CD8-positive, alpha-beta T cell (primary cell): ENCODE measurements at regions of chr17 and their contacts with region 1.

Region 1: GRCh38 chr17:41308251-41308917 is 725 bp downstream of the KRTAP16-1 start:
- DNase-seq: peak; percentile 75 to 95 (median 84)
- ATAC-seq: peak; percentile 82
- H3K4me3 ChIP-seq: peak overlapping the region; percentile 4 to 25
- H3K4me3 Mint-ChIP-seq: peak overlapping the region; percentile 56
- H3K27ac ChIP-seq: peak overlapping the region; percentile 79 to 80
- H3K27ac Mint-ChIP-seq: peak overlapping the region; percentile 98
- H3K4me1 ChIP-seq: peaks cover 48% of the 10 kb centered on the region
- H3K4me1 Mint-ChIP-seq: peaks cover 62% of the 10 kb centered on the region
- H3K27me3 ChIP-seq: no peaks in the 10 kb centered on the region
- H3K27me3 Mint-ChIP-seq: no peaks in the 10 kb centered on the region
- CTCF ChIP-seq: no peak

Region 2: GRCh38 chr17:41127371-41127770 is 181.0 kb before region 1 on chr17:
- CTCF ChIA-PET with region 1: no interaction called
- POLR2A ChIA-PET with region 1: interaction called, 6 read pairs
- intact Hi-C with region 1: loop called (anchors 5 kb)
- DNase-seq: no peak
- ATAC-seq: no peak
- H3K4me3 ChIP-seq: no peak overlapping the region
- H3K4me3 Mint-ChIP-seq: no peak overlapping the region
- H3K27ac ChIP-seq: no peak overlapping the region
- H3K27ac Mint-ChIP-seq: no peak overlapping the region
- H3K4me1 ChIP-seq: peaks cover 43% of the 10 kb centered on the region
- H3K4me1 Mint-ChIP-seq: peaks cover 69% of the 10 kb centered on the region
- H3K27me3 ChIP-seq: no peaks in the 10 kb centered on the region
- H3K27me3 Mint-ChIP-seq: no peaks in the 10 kb centered on the region
- CTCF ChIP-seq: no peak

Region 3: DNA sequence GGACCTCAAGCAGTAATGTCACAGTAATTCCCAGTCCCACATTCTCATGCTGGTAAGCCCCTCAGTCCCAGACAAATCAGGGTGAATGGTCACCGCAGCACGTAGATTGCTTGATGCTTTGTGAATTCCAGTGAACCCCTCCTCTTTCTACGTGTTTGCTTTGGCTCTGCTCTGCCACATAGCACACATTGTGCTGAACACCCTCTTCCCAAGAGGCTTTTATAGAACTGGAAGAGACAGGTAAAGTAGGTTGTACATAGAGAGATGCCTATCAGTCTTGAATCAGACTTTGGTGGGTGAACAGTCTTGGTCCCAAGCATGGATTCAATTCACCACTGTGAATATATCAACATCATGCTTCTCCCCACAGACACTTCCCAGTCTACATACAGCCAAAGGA is 43.8 kb before region 1 on chr17:
- CTCF ChIA-PET with region 1: no interaction called
- POLR2A ChIA-PET with region 1: no interaction called
- intact Hi-C with region 1: no loop called
- DNase-seq: no peak
- ATAC-seq: no peak
- H3K4me3 ChIP-seq: no peak overlapping the region
- H3K4me3 Mint-ChIP-seq: no peak overlapping the region
- H3K27ac ChIP-seq: no peak overlapping the region
- H3K27ac Mint-ChIP-seq: no peak overlapping the region
- H3K4me1 ChIP-seq: no peaks in the 10 kb centered on the region
- H3K4me1 Mint-ChIP-seq: peaks cover 24% of the 10 kb centered on the region
- H3K27me3 ChIP-seq: peaks cover 0 to 3% of the 10 kb centered on the region in 2 experiments
- H3K27me3 Mint-ChIP-seq: peaks cover 4% of the 10 kb centered on the region
- CTCF ChIP-seq: no peak

Region 4: GRCh38 chr17:41338961-41339485 is 30.6 kb after region 1 on chr17:
- CTCF ChIA-PET with region 1: interaction called, 8 read pairs
- POLR2A ChIA-PET with region 1: interaction called, 20 read pairs
- intact Hi-C with region 1: loop called (anchors 1 kb)
- DNase-seq: peak in 5 of 9 experiments; percentile 38 to 94 (median 68)
- ATAC-seq: peak; percentile 82
- H3K4me3 ChIP-seq: peak overlapping the region in 1 of 2 experiments; percentile 2
- H3K4me3 Mint-ChIP-seq: peak overlapping the region; percentile 63
- H3K27ac ChIP-seq: peak overlapping the region; percentile 58 to 63
- H3K27ac Mint-ChIP-seq: peak overlapping the region; percentile 98
- H3K4me1 ChIP-seq: peaks cover 85% of the 10 kb centered on the region
- H3K4me1 Mint-ChIP-seq: peaks cover 90% of the 10 kb centered on the region
- H3K27me3 ChIP-seq: no peaks in the 10 kb centered on the region
- H3K27me3 Mint-ChIP-seq: no peaks in the 10 kb centered on the region
- CTCF ChIP-seq: no peak